ENCODE measurements at regions of chr17 and their contacts with region 1.

Region 1: GRCh38 chr17:34420254-34420766 is 57.3 kb upstream of the CCL1 start:
- DNase-seq: peak; percentile 34
- ATAC-seq: peak; percentile 45
- H3K4me3 Mint-ChIP-seq: no peak overlapping the region
- H3K27ac Mint-ChIP-seq: no peak overlapping the region
- H3K4me1 Mint-ChIP-seq: peaks cover 2% of the 10 kb centered on the region
- H3K27me3 Mint-ChIP-seq: peaks cover 28% of the 10 kb centered on the region
- CTCF ChIP-seq: peak; percentile 99

Region 2: DNA sequence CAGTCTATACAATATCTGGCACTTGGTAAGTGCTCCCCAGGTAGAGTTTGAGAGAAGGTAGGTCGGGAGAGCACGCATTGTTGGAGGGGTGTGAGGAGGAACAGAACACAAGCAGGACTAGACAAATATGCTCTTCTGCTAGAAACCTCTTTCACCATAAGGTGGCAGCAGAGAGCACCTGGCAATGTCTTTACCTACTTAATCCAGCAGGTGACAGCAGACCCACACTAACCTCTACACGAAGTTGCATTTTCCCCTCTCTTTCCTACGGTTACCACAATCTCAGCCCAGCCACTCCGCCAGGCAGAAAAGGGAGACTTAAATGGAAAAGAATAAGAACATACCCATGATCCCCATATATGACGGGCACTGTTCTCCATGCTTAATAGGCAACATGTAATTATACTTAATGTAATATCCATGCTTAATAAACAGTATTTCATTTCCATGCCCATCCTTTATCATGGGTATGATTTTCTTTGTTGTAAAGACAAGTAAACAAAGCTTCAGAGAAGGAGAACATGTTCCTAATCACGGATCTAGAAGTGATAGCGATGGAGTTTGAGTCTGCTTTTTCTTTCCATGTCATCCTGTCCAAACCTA is 220.3 kb before region 1 on chr17:
- CTCF ChIA-PET with region 1: interaction called, 3 read pairs
- POLR2A ChIA-PET with region 1: no interaction called
- intact Hi-C with region 1: loop called (anchors 1 kb)
- DNase-seq: peak; percentile 25
- ATAC-seq: peak; percentile 93
- H3K4me3 Mint-ChIP-seq: no peak overlapping the region
- H3K27ac Mint-ChIP-seq: no peak overlapping the region
- H3K4me1 Mint-ChIP-seq: peaks cover 2% of the 10 kb centered on the region
- H3K27me3 Mint-ChIP-seq: peaks cover 27% of the 10 kb centered on the region
- CTCF ChIP-seq: peak; percentile 99

Region 3: GRCh38 chr17:34398990-34399389 is 21.3 kb before region 1 on chr17:
- CTCF ChIA-PET with region 1: interaction called, 10 read pairs
- POLR2A ChIA-PET with region 1: no interaction called
- intact Hi-C with region 1: no loop called
- DNase-seq: no peak
- ATAC-seq: peak; percentile 87
- H3K4me3 Mint-ChIP-seq: no peak overlapping the region
- H3K27ac Mint-ChIP-seq: no peak overlapping the region
- H3K4me1 Mint-ChIP-seq: peaks cover 32% of the 10 kb centered on the region
- H3K27me3 Mint-ChIP-seq: no peaks in the 10 kb centered on the region
- CTCF ChIP-seq: no peak

Region 4: GRCh38 chr17:34637548-34638525 is 217.5 kb after region 1 on chr17:
- CTCF ChIA-PET with region 1: interaction called, 10 read pairs
- POLR2A ChIA-PET with region 1: no interaction called
- intact Hi-C with region 1: loop called (anchors 1 kb)
- DNase-seq: peak; percentile 53
- ATAC-seq: peak; percentile 95
- H3K4me3 Mint-ChIP-seq: peak overlapping the region; percentile 77
- H3K27ac Mint-ChIP-seq: no peak overlapping the region
- H3K4me1 Mint-ChIP-seq: peaks cover 5% of the 10 kb centered on the region
- H3K27me3 Mint-ChIP-seq: peaks cover 39% of the 10 kb centered on the region
- CTCF ChIP-seq: peak; percentile 38

Region 5: GRCh38 chr17:34980681-34981537 is 560.6 kb after region 1 on chr17:
- CTCF ChIA-PET with region 1: no interaction called
- POLR2A ChIA-PET with region 1: interaction called, 3 read pairs
- intact Hi-C with region 1: loop called (anchors 2 kb)
- DNase-seq: peak; percentile 92
- ATAC-seq: peak; percentile 91
- H3K4me3 Mint-ChIP-seq: peak overlapping the region; percentile 88
- H3K27ac Mint-ChIP-seq: peak overlapping the region; percentile 87
- H3K4me1 Mint-ChIP-seq: peaks cover 32% of the 10 kb centered on the region
- H3K27me3 Mint-ChIP-seq: no peaks in the 10 kb centered on the region
- CTCF ChIP-seq: no peak

Measured in activated B cell treated with CpG ODN at 0.5 μM for 24 hours (primary cell).